ENCODE measurements at regions of chr6 and their contacts with region 1.

Region 1: DNA sequence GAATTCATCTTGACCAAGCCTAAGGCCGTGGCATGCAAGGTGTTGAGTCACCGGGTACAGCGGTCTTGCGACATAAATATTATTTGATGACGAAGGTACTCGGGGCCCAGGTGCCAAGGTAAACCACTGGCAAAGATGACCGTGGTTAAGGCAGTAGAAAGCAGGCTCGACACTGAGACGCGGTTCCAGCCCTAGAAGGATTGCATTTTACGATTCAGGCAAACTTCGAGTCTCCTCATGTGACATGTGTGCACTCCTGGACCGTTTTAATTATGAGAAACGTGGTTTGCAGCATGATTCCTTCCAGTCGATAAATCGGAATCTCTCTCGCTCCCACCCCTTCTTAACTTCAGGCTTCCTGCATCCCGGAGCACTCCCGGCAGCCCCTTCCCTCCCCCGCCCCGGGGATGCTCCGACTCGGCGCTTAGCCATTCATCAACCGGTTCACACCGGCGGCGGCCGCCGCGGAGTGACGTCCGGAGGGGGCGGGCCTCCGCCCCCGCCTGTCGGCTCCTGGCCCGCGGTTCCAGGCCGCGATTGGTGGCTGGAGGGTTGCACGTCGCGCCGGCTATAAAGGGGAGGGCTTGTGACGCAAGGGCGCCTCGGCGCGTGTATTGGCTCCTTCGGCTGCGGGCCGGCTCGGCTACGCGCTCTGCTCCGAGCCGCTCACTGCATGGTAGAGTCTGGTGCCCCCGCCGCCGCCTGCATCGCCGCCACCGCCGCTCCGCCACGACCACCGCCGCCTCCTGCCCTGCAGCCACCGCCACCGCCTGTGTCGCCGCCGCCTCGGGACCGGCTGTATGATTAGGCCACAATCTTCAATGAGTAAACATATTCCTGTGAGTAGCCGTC is at the starts of genes LOC128125822 and PTP4A1:
- DNase-seq: peak; percentile 96 to 98
- H3K4me3 ChIP-seq: peak within 1 kb of the TSS; percentile 92 to 93
- H3K27ac ChIP-seq: peak within 1 kb of the TSS; percentile 100
- H3K4me1 ChIP-seq: peaks cover 24% of the 10 kb centered on the region
- H3K27me3 ChIP-seq: no peaks in the 10 kb centered on the region
- CTCF ChIP-seq: no peak
- POLR2A ChIP-seq: peak; percentile 91 to 99
- total RNA-seq, gene PTP4A1: 29.5 TPM

Region 2: DNA sequence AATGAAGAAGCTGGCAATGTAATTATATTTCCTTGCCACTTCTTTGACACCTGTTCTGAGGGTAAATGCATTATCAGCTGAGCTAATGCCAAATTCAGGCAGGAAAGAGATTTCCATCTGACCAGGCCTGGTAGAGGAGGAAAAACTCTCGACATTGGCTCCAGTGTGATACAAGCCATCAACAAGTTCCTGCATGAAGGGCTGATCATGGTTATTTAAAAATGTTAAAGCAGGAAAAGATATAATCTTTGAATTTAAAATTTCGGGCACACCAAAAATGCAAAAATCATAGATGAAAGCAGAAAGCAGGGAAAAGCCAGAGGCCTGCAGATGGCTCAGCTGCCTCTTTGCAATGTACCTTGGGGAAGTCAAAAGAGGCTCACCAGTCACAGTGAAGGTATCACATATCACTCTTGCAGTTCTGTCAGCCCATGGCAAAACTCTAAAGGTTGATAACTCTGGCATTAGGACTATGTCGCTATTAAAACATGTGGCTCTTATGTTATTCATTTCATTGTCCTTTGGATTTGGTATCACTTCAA is 291.4 kb before region 1 on chr6:
- intact Hi-C with region 1: no loop called
- DNase-seq: no peak
- H3K4me3 ChIP-seq: no peak overlapping the region
- H3K27ac ChIP-seq: no peak overlapping the region
- H3K4me1 ChIP-seq: no peaks in the 10 kb centered on the region
- H3K27me3 ChIP-seq: no peaks in the 10 kb centered on the region
- CTCF ChIP-seq: no peak
- POLR2A ChIP-seq: no peak

Region 3: DNA sequence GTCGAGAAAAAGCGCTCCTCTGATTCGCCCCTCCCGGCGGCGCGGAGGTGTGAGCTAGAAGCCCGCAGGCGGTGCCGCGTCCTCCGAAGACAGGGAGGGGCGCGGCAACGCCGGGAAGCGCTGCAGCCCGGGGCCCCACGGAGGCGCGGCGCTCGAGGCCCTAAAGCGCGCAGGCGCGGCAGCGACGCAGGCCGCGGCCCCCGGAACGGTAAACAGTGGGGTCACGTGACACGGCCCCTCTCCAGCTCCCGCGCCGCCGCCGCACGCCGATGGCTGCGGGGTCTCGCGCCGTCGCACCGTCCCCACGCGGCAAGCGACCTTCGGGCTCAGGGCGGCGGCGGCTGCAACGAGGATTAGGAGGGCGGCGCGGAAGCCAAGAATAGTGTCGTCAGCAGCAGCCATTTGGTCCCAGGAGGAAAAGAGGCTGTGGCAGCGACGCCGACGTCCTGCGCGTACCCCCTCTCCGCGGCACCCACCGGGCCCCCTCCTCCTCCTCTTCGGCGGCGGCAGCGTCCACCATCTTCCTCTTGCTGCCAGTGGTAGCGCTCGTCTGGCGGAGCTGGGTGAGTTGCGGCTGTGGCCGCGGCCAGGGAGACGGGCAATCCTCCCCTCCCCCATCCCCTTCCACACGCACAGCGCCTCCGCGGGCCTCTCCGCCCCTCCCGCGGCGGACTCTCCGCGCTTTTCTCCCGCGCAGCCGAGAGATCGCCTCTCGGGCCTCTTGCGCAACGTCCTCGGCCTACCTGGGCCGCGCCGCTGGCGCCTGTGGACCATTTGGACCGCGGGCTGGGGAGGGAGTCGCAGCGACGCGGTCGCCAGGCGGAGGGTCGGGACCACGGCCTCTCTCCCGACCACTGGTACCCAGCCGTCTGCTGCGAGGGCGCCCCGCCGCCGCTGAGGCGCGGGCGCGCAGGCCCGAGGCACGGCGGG is 63.7 kb after region 1 on chr6 and contains the start of gene PHF3:
- intact Hi-C with region 1: loop called (anchors 2 kb)
- DNase-seq: peak in 1 of 2 donors; percentile 89
- H3K4me3 ChIP-seq: peak within 1 kb of the TSS; percentile 75 to 91
- H3K27ac ChIP-seq: peak within 1 kb of the TSS; percentile 96
- H3K4me1 ChIP-seq: peaks cover 36% of the 10 kb centered on the region
- H3K27me3 ChIP-seq: no peaks in the 10 kb centered on the region
- CTCF ChIP-seq: no peak
- POLR2A ChIP-seq: peak in 1 of 2 donors; percentile 42
- total RNA-seq, gene PHF3: 58.7 TPM

Region 4: GRCh38 chr6:63649269-63649668 is 77.2 kb after region 1 on chr6:
- intact Hi-C with region 1: no loop called
- DNase-seq: no peak
- H3K4me3 ChIP-seq: no peak overlapping the region
- H3K27ac ChIP-seq: no peak overlapping the region
- H3K4me1 ChIP-seq: peaks cover 47% of the 10 kb centered on the region
- H3K27me3 ChIP-seq: no peaks in the 10 kb centered on the region
- CTCF ChIP-seq: no peak
- POLR2A ChIP-seq: no peak